Lower leg skin (tissue), 4 donors: ENCODE measurements at regions of chr4 and their contacts with region 1.

Region 1: DNA sequence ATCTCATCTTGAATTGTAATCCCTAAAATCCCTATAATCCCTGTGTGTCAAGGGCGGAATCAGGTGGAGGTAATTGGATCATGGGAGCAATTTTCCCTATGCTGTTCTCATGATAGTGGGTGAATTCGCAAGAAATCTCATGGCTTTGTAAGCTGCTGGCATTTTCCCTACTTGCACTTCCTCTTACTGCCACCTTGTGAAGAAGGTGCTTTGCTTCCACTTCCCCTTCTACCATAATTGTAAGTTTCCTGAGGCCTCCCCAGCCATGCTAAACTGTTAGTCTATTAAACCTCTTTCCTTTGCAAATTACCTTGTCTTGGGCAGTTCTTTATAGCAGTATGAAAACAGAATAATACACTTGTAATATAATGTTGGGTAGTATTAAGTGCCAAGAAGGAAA is 1087.4 kb upstream of the SLIT2 start:
- DNase-seq: no peak
- H3K4me3 ChIP-seq: no peak overlapping the region
- CTCF ChIP-seq: no peak
- POLR2A ChIP-seq: no peak

Region 2: GRCh38 chr4:18100657-18101056 is 1063.7 kb before region 1 on chr4:
- intact Hi-C with region 1: loop called (anchors 10 kb)
- DNase-seq: no peak
- H3K4me3 ChIP-seq: no peak overlapping the region
- CTCF ChIP-seq: no peak
- POLR2A ChIP-seq: no peak

Region 3: DNA sequence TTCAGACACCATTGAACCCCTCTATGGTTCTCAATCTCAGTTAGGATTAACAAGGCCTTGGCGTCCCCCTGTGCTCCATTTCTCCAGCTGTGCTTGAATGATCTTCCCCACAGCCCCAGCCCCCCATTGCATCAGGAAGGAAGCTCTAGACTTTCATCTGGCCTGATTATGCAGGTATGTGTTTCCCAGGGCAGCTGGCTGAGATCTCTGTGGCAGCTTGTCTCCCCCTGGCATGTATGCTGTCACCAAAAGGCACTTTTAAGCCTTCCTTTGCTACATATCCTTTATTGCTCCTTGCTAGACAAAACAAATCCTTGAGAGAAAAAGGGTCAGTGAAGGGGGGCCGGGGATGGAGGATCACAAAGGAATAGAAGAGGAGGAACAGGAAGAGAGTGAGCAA is 31.4 kb after region 1 on chr4:
- intact Hi-C with region 1: no loop called
- DNase-seq: no peak
- H3K4me3 ChIP-seq: no peak overlapping the region
- CTCF ChIP-seq: no peak
- POLR2A ChIP-seq: no peak

Region 4: DNA sequence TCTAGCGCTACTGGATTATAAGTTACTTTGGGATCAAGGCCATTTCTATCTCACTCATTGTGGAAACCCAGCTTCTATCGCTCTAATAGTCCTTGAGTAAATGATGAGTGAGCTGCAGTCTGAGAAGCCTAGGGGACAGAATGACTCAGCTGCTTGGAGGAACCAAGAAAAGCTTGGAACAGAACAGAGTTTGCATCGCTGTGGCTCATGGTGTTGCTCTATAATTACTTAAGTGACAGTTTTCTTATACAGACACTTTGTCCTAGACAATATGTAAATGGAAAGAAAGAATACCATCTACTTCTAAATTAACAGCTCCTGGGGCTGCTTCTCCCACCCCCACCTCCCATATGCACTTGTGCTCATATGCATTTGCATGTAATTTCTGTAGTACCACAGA is 1244.3 kb after region 1 on chr4:
- intact Hi-C with region 1: no loop called
- DNase-seq: no peak
- H3K4me3 ChIP-seq: no peak overlapping the region
- CTCF ChIP-seq: no peak
- POLR2A ChIP-seq: no peak